Keratinocyte (primary cell): ENCODE measurements at regions of chr12 and their contacts with region 1.

Region 1: GRCh38 chr12:84397263-84397662 is 515.3 kb downstream of the SLC6A15 start:
- DNase-seq: no peak
- H3K4me3 ChIP-seq: no peak overlapping the region
- H3K27ac ChIP-seq: no peak overlapping the region
- H3K4me1 ChIP-seq: no peaks in the 10 kb centered on the region
- H3K27me3 ChIP-seq: no peaks in the 10 kb centered on the region
- CTCF ChIP-seq: peak in 1 of 3 experiments; percentile 13

Region 2: GRCh38 chr12:83826112-83826511 is 571.2 kb before region 1 on chr12:
- dilution Hi-C with region 1: loop called (anchors 25 kb)
- DNase-seq: no peak
- H3K4me3 ChIP-seq: no peak overlapping the region
- H3K27ac ChIP-seq: no peak overlapping the region
- H3K4me1 ChIP-seq: peaks cover 2% of the 10 kb centered on the region
- H3K27me3 ChIP-seq: no peaks in the 10 kb centered on the region
- CTCF ChIP-seq: peak; percentile 90 to 98 (median 91)

Region 3: DNA sequence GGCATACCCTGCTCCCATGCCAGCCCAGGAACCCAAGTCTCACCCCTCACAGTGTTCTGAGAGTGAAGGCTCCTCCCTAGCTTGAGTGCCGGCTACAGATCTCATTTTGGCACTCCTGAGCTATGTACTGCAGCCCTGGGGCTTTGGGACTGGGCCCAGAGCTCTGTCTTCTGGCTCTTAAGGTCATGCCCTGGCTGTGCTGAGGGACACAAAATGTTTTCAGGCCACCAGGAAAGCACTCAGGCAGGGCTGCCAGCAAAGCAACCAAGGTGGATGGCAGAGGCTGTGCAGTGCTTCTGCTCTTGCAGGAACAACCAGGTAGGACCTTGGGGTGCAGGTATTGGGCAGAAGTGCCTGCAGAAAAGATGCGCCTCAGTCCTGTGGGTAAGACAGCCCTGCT is 48.7 kb before region 1 on chr12:
- dilution Hi-C with region 1: no loop called
- DNase-seq: no peak
- H3K4me3 ChIP-seq: no peak overlapping the region
- H3K27ac ChIP-seq: no peak overlapping the region
- H3K4me1 ChIP-seq: no peaks in the 10 kb centered on the region
- H3K27me3 ChIP-seq: no peaks in the 10 kb centered on the region
- CTCF ChIP-seq: no peak